CD8-positive, alpha-beta T cell (primary cell): ENCODE measurements at regions of chr14 and their contacts with region 1.

Region 1: GRCh38 chr14:27984103-27984502 is 782.5 kb upstream of the FOXG1 start:
- DNase-seq: no peak
- ATAC-seq: no peak
- H3K4me3 ChIP-seq: no peak overlapping the region
- H3K4me3 Mint-ChIP-seq: no peak overlapping the region
- H3K27ac ChIP-seq: no peak overlapping the region
- H3K27ac Mint-ChIP-seq: no peak overlapping the region
- H3K4me1 ChIP-seq: no peaks in the 10 kb centered on the region
- H3K4me1 Mint-ChIP-seq: no peaks in the 10 kb centered on the region
- H3K27me3 ChIP-seq: no peaks in the 10 kb centered on the region
- H3K27me3 Mint-ChIP-seq: no peaks in the 10 kb centered on the region
- CTCF ChIP-seq: no peak

Region 2: GRCh38 chr14:27881646-27882045 is 102.5 kb before region 1 on chr14:
- CTCF ChIA-PET with region 1: no interaction called
- POLR2A ChIA-PET with region 1: no interaction called
- intact Hi-C with region 1: loop called in 1 of 2 experiments (anchors 5 kb)
- DNase-seq: no peak
- ATAC-seq: no peak
- H3K4me3 ChIP-seq: no peak overlapping the region
- H3K4me3 Mint-ChIP-seq: no peak overlapping the region
- H3K27ac ChIP-seq: no peak overlapping the region
- H3K27ac Mint-ChIP-seq: no peak overlapping the region
- H3K4me1 ChIP-seq: no peaks in the 10 kb centered on the region
- H3K4me1 Mint-ChIP-seq: no peaks in the 10 kb centered on the region
- H3K27me3 ChIP-seq: no peaks in the 10 kb centered on the region
- H3K27me3 Mint-ChIP-seq: no peaks in the 10 kb centered on the region
- CTCF ChIP-seq: no peak

Region 3: DNA sequence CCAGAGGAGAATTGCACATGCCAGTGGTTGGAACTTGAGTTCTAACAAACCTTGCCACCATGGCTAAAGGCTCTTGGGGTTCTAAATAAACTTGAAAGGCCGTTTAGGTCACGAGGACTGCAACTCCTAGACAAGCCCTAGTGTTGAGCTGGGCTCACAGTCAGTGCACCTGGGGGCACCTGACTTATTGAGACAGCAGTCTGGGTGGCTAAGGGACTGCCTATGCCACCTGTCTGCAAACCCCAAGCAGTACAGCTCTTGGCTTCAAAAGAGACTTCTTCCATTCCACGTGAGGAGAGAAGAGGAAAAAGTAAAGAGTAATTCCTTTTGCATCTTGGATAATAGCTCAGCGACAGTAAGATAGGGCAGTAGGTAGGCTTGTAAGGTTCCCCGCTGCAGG is 16.9 kb after region 1 on chr14:
- CTCF ChIA-PET with region 1: no interaction called
- POLR2A ChIA-PET with region 1: no interaction called
- intact Hi-C with region 1: no loop called
- DNase-seq: no peak
- ATAC-seq: no peak
- H3K4me3 ChIP-seq: no peak overlapping the region
- H3K4me3 Mint-ChIP-seq: no peak overlapping the region
- H3K27ac ChIP-seq: no peak overlapping the region
- H3K27ac Mint-ChIP-seq: no peak overlapping the region
- H3K4me1 ChIP-seq: no peaks in the 10 kb centered on the region
- H3K4me1 Mint-ChIP-seq: no peaks in the 10 kb centered on the region
- H3K27me3 ChIP-seq: no peaks in the 10 kb centered on the region
- H3K27me3 Mint-ChIP-seq: no peaks in the 10 kb centered on the region
- CTCF ChIP-seq: no peak